GM10248 (cell line): ENCODE measurements at regions of chr6 and their contacts with region 1.

Region 1: DNA sequence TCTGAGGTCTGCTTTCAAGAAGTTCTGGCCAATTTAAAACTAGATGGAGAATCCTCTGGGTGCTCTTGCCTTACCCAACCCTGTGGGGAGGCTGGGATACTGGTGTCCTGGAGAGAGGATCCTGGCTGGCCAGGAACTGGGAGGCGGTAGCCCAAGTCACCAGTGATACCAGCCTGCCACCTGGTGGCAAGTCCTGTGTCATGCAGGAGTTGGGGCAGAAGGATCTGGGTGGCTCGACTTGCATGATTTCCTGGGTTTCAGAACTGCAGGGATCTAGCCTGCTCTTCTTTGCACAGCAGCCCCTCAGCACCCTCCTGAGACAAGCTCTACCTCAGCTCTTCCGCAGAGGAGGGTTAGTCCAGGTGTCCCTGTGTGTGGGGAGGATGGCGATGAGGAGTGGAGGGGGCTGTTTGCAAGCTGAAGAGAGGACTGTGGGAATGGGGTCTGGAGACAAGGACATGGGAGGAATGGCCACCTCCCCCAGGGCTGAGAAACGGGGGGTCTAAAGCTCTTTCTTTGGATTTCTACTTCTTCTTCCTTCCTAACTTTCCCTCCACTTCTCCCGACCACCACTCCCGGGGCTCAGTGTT is 4.2 kb downstream of the KCNK17 start:
- DNase-seq: peak; percentile 79
- CTCF ChIP-seq: peak; percentile 92

Region 2: DNA sequence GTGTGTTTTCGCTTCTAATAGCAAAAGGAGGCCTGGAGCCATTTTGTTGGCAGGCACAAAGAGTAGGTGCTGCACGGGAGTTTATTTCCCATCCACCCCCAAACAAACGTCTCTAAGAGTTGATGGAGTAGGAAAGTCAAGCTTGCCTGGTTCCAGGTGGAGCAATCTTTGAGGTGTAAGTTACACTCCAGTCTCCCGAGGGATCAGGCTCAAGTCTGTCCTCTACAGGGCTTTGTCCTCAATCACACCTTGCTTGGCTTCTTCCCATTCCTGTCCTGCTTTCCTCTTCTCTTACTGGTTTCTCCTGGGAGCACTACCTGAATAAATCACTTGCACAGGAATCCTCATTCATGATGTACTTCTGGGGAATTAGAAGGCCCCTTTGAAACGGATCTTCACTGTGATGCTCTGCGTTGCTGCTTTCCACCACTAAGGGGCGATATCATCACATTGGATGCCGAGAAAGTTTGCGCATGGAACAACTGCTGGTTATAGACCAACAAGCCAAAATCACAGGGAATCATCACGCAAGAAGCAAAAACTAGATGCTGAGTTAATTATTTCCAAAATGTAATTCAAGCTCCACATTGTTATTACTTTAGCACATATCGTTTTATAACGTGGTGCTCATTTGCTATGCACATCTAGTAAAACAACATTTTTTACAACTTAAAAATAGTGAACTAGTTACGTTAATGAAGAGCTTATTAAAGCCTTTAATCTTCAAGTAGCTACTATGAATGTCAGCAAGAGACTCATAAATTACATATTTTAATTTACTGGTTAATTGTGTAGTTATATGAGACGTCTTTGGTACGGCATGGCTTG is 438.1 kb before region 1 on chr6:
- CTCF ChIA-PET with region 1: interaction called, 30 read pairs
- POLR2A ChIA-PET with region 1: no interaction called
- DNase-seq: peak; percentile 41
- CTCF ChIP-seq: peak; percentile 91

Region 3: GRCh38 chr6:38973178-38974054 is 336.6 kb before region 1 on chr6:
- CTCF ChIA-PET with region 1: interaction called, 10 read pairs
- POLR2A ChIA-PET with region 1: no interaction called
- DNase-seq: peak; percentile 34
- CTCF ChIP-seq: peak; percentile 53

Region 4: DNA sequence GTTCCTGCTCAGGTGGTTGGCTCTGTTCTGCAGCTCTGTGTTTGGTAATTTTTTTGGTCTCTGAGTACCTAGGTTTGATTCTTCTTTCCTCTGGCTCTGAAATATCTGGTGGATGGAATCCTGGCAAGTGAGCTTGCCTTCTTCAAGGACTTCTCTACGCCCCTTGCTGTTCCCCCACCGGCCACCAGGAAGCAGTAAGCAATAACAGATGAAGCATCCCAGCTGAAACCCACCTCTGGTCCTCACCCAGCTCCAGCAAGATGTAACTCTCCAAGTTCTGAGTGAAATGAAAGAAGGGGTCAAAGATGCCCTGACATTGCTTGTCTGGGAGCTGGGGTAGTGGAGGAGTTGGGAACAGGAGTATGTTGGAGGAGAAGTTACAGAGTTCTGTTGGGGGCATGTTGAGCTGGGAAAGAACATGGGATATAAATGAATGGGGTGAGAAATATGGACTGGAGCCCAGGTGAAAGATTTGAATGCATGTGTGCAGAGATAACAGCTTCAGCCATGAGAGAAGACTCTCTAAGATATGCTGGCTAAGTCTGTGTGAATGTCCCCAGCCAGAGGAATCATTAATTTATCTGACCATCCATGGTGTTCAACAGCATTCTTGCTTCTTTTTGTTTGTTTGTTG is 312.8 kb before region 1 on chr6:
- CTCF ChIA-PET with region 1: interaction called, 17 read pairs
- POLR2A ChIA-PET with region 1: no interaction called
- DNase-seq: peak; percentile 13
- CTCF ChIP-seq: peak; percentile 30

Region 5: DNA sequence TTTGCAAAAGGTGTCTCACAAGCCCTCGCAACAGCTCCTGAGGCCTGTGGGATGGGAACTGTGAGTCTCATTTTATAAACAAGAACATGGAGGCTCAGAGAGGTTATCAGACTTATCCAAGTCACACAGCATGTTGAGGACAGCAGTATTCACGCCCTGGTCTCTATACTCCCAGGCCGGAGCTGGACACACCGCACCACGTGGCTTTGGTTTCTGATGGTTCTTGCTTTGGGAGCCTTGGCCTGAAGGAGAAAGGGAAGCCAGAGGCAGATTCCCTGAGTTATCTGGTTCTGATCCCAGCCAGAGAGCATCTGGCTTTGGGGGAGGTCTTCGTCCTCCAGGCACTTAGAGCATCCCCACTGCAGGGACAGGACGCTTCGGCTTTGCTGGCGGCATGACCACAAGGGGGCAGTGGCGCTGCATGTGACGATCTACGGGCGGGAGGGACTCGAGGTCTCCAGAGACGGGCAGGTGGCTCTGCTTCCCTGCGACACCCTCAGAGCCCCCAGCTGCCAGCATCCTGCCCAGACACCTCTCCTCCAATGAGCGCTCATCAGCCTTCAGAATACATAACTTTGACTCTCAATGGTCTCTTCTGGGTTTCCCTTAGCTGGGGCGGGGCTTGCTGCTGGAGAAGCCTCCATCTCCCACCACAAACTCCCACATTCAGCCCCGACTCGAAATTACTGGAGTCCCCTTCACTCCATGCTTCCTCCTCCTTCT is 143.7 kb before region 1 on chr6:
- CTCF ChIA-PET with region 1: interaction called, 265 read pairs
- POLR2A ChIA-PET with region 1: no interaction called
- DNase-seq: peak; percentile 85
- CTCF ChIP-seq: peak; percentile 96

Region 6: GRCh38 chr6:39280247-39280731 is 29.7 kb before region 1 on chr6:
- CTCF ChIA-PET with region 1: no interaction called
- POLR2A ChIA-PET with region 1: no interaction called
- DNase-seq: no peak
- CTCF ChIP-seq: no peak

Region 7: DNA sequence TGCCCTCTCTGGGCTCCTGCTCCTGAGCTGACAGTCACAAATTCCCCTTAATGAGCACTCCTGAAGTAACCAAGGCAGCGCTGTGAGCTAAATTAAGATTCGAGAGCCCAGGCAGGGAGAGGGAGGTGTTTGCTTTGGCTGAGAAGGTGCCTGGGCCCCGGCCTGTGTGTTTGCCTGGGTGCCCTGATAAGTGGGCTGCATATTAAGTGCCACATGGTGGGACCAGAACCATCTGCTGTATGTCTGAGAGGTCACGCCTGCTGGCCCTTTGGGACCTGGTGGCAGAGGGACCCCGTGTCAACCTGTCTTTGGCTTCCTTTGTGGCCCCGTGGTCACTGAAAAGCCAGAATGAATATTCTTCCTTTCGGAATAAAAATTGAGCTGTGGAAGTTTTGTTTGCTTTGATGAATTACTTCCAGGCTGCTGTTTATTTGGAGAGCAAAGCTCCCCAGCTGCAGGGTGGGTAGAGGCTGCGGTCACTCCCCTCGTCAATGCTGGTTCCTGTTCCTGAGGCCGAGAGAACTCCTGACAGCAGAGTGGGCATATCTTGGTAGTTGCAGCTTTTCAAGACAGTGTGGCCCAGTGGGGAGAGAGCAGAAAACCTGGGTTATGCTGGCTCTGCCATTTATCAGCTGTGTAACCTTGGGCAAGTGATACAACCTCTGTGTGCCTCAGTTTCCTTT is 30.0 kb after region 1 on chr6:
- CTCF ChIA-PET with region 1: no interaction called
- POLR2A ChIA-PET with region 1: no interaction called
- DNase-seq: no peak
- CTCF ChIP-seq: no peak

Region 8: DNA sequence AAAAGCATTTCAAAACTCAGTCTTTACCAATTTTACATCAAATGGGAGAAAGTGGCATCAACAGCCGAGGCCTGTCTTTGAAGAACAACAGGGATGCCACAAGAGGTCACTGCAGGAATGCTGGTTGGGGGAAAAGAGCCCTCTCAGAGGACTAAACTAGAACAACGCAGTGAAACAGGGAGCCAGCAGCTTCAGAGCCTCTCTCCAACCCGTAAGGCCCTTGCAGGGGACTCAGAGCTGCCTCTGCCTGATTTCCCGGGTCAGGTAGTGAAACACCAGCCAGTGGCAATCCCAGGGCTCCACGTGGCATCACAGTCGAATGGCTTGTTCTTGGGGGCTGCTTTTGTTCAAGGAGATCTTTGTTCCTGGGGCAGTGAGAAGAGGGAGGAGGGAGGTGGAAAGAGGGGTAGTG is 67.5 kb after region 1 on chr6:
- CTCF ChIA-PET with region 1: no interaction called
- POLR2A ChIA-PET with region 1: no interaction called
- DNase-seq: peak; percentile 52
- CTCF ChIP-seq: peak; percentile 60